Heart right ventricle (tissue), 16 donors: ENCODE measurements at regions of chr14 and their contacts with region 1.

Region 1: GRCh38 chr14:71056168-71056567 is 148.9 kb downstream of the PCNX1 start:
- DNase-seq: no peak
- ATAC-seq: no peak
- H3K4me3 ChIP-seq: no peak overlapping the region
- H3K27ac ChIP-seq: no peak overlapping the region
- H3K4me1 ChIP-seq: no peaks in the 10 kb centered on the region
- H3K27me3 ChIP-seq: no peaks in the 10 kb centered on the region
- CTCF ChIP-seq: no peak

Region 2: DNA sequence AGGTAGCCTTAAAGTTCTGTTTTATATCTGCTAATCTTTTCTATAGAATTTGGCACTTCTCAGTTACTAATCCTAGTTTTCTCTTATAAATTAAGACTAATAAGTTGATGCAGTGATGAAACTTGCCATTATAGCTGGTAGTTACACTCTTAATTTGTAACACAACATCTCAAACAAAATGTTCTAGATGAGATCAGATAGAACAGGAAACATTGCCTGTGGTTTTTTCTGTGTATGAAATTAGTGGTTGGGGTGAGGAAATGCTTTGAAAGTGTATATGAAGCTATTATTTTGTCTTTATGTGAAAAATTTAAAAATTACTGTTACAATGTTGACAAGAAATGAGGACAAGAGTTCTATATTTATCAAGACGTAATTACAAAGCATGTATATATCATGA is 57.1 kb before region 1 on chr14:
- intact Hi-C with region 1: no loop called
- DNase-seq: no peak
- ATAC-seq: peak in 1 of 8 donors; percentile 52
- H3K4me3 ChIP-seq: no peak overlapping the region
- H3K27ac ChIP-seq: peak overlapping the region in 1 of 10 donors; percentile 73
- H3K4me1 ChIP-seq: peaks cover 0 to 45% (median 7%) of the 10 kb centered on the region in 9 donors
- H3K27me3 ChIP-seq: no peaks in the 10 kb centered on the region
- CTCF ChIP-seq: no peak

Region 3: GRCh38 chr14:71086567-71086966 is 30.4 kb after region 1 on chr14:
- intact Hi-C with region 1: no loop called
- DNase-seq: no peak
- ATAC-seq: no peak
- H3K4me3 ChIP-seq: no peak overlapping the region
- H3K27ac ChIP-seq: no peak overlapping the region
- H3K4me1 ChIP-seq: peaks cover 0 to 11% (median 0%) of the 10 kb centered on the region in 9 donors
- H3K27me3 ChIP-seq: no peaks in the 10 kb centered on the region
- CTCF ChIP-seq: no peak

Region 4: DNA sequence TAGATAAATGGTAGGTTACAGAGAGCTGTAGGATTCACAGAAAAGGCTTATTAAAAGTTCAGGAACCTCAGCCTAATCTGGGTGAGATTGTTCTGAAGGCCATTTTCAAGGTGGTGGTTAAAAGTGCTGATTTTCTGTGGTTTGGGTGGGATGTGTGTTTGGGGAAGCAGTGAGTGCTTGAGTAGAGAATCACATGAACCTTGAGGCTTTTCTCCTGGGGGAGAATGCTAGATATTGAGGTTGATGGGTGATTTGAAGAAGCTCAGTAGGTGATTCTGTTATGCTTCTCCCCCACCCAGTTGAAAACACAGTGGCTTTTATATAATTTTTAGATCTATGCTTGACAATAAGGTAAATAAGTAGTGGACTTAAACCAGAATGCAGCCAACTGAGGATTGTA is 272.0 kb after region 1 on chr14:
- intact Hi-C with region 1: no loop called
- DNase-seq: no peak
- ATAC-seq: no peak
- H3K4me3 ChIP-seq: no peak overlapping the region
- H3K27ac ChIP-seq: no peak overlapping the region
- H3K4me1 ChIP-seq: peaks cover 0 to 42% (median under 1%) of the 10 kb centered on the region in 9 donors
- H3K27me3 ChIP-seq: no peaks in the 10 kb centered on the region
- CTCF ChIP-seq: no peak

Region 5: DNA sequence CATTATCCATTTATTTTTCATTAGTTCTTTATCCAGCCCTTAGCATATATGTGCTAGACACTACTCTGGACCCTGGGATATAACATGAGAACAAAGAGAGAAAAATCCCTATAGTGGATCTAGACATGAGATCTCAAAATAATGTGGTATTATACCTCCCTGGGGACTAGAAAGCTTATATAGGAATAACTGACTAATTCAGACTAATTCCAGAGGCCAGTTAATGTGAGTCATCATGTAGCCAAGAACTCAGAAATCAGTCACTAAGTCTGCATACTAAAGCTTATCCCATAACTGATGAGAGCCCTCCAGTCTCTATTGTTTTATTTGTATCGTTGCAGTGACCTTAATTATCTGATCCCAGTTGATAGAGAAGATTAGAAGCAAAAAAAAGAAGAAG is 609.0 kb after region 1 on chr14:
- intact Hi-C with region 1: loop called in 1 of 10 experiments (anchors 5 kb)
- DNase-seq: no peak
- ATAC-seq: no peak
- H3K4me3 ChIP-seq: no peak overlapping the region
- H3K27ac ChIP-seq: no peak overlapping the region
- H3K4me1 ChIP-seq: peaks cover 0 to 4% (median 0%) of the 10 kb centered on the region in 9 donors
- H3K27me3 ChIP-seq: no peaks in the 10 kb centered on the region
- CTCF ChIP-seq: no peak